ENCODE measurements at regions of chr2 and their contacts with region 1.

Region 1: GRCh38 chr2:107473145-107473544 is 353.5 kb upstream of the RGPD4 start:
- DNase-seq: no peak

Region 2: GRCh38 chr2:106316915-106317314 is 1156.2 kb before region 1 on chr2:
- intact Hi-C with region 1: loop called in 1 of 2 experiments (anchors 5 kb)
- DNase-seq: no peak